ENCODE measurements at regions of chr1 and their contacts with region 1.

Region 1: GRCh38 chr1:93909146-93910050 is at the start of gene GCLM:
- DNase-seq: peak; percentile 86 to 90 (median 88)
- H3K4me3 ChIP-seq: peak within 1 kb of the TSS; percentile 53 to 67
- H3K4me3 Mint-ChIP-seq: peak within 1 kb of the TSS; percentile 85 to 99 (median 92)
- H3K27ac ChIP-seq: peak within 1 kb of the TSS; percentile 61
- H3K27ac Mint-ChIP-seq: peak within 1 kb of the TSS; percentile 83 to 98 (median 94)
- H3K4me1 ChIP-seq: peaks cover 37% of the 10 kb centered on the region
- H3K4me1 Mint-ChIP-seq: peaks cover 30 to 40% (median 33%) of the 10 kb centered on the region in 4 donors
- H3K27me3 ChIP-seq: no peaks in the 10 kb centered on the region
- H3K27me3 Mint-ChIP-seq: peaks cover 0 to 2% of the 10 kb centered on the region in 2 donors
- total RNA-seq, gene GCLM: 22.0 to 26.8 TPM

Region 2: GRCh38 chr1:93179886-93180722 is 729.3 kb before region 1 on chr1 and contains the start of gene TMED5:
- CTCF ChIA-PET with region 1: no interaction called
- POLR2A ChIA-PET with region 1: no interaction called
- intact Hi-C with region 1: loop called (anchors 10 kb)
- DNase-seq: peak; percentile 97 to 98 (median 97)
- H3K4me3 ChIP-seq: peak within 1 kb of the TSS; percentile 84 to 99
- H3K4me3 Mint-ChIP-seq: peak within 1 kb of the TSS; percentile 89 to 99 (median 93)
- H3K27ac ChIP-seq: peak within 1 kb of the TSS; percentile 98
- H3K27ac Mint-ChIP-seq: peak within 1 kb of the TSS; percentile 90 to 99 (median 96)
- H3K4me1 ChIP-seq: peaks cover 59% of the 10 kb centered on the region
- H3K4me1 Mint-ChIP-seq: peaks cover 26 to 70% (median 41%) of the 10 kb centered on the region in 4 donors
- H3K27me3 ChIP-seq: no peaks in the 10 kb centered on the region
- H3K27me3 Mint-ChIP-seq: no peaks in the 10 kb centered on the region
- total RNA-seq, gene TMED5: 60.1 to 60.8 TPM

Region 3: GRCh38 chr1:93437976-93438605 is 471.3 kb before region 1 on chr1:
- CTCF ChIA-PET with region 1: no interaction called
- POLR2A ChIA-PET with region 1: no interaction called
- intact Hi-C with region 1: loop called (anchors 1 kb)
- DNase-seq: peak in 4 of 5 donors; percentile 33 to 44 (median 40)
- H3K4me3 ChIP-seq: no peak overlapping the region
- H3K4me3 Mint-ChIP-seq: peak overlapping the region in 1 of 8 donors; percentile 15
- H3K27ac ChIP-seq: no peak overlapping the region
- H3K27ac Mint-ChIP-seq: no peak overlapping the region
- H3K4me1 ChIP-seq: no peaks in the 10 kb centered on the region
- H3K4me1 Mint-ChIP-seq: peaks cover 0 to 7% (median 3%) of the 10 kb centered on the region in 4 donors
- H3K27me3 ChIP-seq: no peaks in the 10 kb centered on the region
- H3K27me3 Mint-ChIP-seq: peaks cover 4 to 7% of the 10 kb centered on the region in 2 donors

Region 4: GRCh38 chr1:93878889-93879586 is 30.4 kb before region 1 on chr1 and contains the start of gene DNTTIP2:
- CTCF ChIA-PET with region 1: interaction called, 31 read pairs
- POLR2A ChIA-PET with region 1: interaction called, 78 read pairs
- intact Hi-C with region 1: loop called (anchors 1 kb)
- DNase-seq: peak; percentile 86 to 89 (median 88)
- H3K4me3 ChIP-seq: peak within 1 kb of the TSS; percentile 88 to 96
- H3K4me3 Mint-ChIP-seq: peak within 1 kb of the TSS; percentile 92 to 100 (median 98)
- H3K27ac ChIP-seq: peak within 1 kb of the TSS; percentile 92
- H3K27ac Mint-ChIP-seq: peak within 1 kb of the TSS; percentile 97 to 100 (median 99)
- H3K4me1 ChIP-seq: peaks cover 38% of the 10 kb centered on the region
- H3K4me1 Mint-ChIP-seq: peaks cover 29 to 54% (median 41%) of the 10 kb centered on the region in 4 donors
- H3K27me3 ChIP-seq: no peaks in the 10 kb centered on the region
- H3K27me3 Mint-ChIP-seq: no peaks in the 10 kb centered on the region
- total RNA-seq, gene DNTTIP2: 71.4 to 75.4 TPM

Region 5: DNA sequence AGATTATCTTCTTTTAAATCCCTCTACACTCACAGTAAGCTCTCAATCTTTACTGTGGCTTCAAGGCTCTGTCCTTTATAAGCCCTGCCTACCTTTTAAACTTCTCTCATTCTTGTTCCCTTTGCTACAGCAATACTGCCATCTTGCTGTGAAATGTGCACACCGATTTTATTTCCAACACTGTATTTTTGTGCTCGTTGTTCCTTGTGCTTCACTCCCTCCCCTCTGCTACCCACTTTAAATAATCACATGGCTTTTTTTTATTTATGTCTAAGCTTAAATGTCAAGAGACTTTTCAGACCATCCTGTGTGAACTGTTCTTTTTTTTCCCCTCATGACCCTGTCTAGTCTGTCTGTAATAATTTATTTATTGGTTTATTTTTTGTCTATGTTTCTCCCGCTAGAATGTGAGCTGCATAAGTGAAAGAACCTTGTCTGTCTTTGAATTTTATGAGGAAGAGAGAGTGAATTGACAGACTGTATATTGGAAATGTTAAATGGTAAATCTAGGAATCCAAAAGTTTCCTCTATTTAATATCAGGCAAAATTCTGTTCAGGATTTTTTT is 554.5 kb after region 1 on chr1:
- CTCF ChIA-PET with region 1: no interaction called
- POLR2A ChIA-PET with region 1: no interaction called
- intact Hi-C with region 1: loop called (anchors 2 kb)
- DNase-seq: peak in 4 of 5 donors; percentile 16 to 28 (median 20)
- H3K4me3 ChIP-seq: no peak overlapping the region
- H3K4me3 Mint-ChIP-seq: no peak overlapping the region
- H3K27ac ChIP-seq: no peak overlapping the region
- H3K27ac Mint-ChIP-seq: peak overlapping the region in 3 of 7 donors; percentile 20 to 65 (median 48)
- H3K4me1 ChIP-seq: no peaks in the 10 kb centered on the region
- H3K4me1 Mint-ChIP-seq: peaks cover 0 to 6% (median 0%) of the 10 kb centered on the region in 4 donors
- H3K27me3 ChIP-seq: no peaks in the 10 kb centered on the region
- H3K27me3 Mint-ChIP-seq: no peaks in the 10 kb centered on the region

Measured in CD4-positive, alpha-beta memory T cell (primary cell).